ENCODE measurements at regions of chr20 and their contacts with region 1.

Region 1: GRCh38 chr20:44966030-44966961 is at the start of gene STK4:
- DNase-seq: peak; percentile 92
- H3K4me3 ChIP-seq: peak within 1 kb of the TSS; percentile 65 to 82
- H3K27ac ChIP-seq: peak within 1 kb of the TSS; percentile 80 to 84
- H3K4me1 ChIP-seq: peaks cover 6% of the 10 kb centered on the region
- H3K27me3 ChIP-seq: no peaks in the 10 kb centered on the region
- CTCF ChIP-seq: peak; percentile 54 to 82 (median 67)
- POLR2A ChIP-seq: peak; percentile 86
- total RNA-seq, gene STK4: 14.4 to 35.1 TPM

Region 2: GRCh38 chr20:44885392-44886265 is 80.7 kb before region 1 on chr20 and contains the start of gene YWHAB:
- intact Hi-C with region 1: loop called (anchors 5 kb)
- DNase-seq: peak; percentile 97
- H3K4me3 ChIP-seq: peak within 1 kb of the TSS; percentile 81 to 100
- H3K27ac ChIP-seq: peak within 1 kb of the TSS; percentile 87 to 93
- H3K4me1 ChIP-seq: peaks cover 15% of the 10 kb centered on the region
- H3K27me3 ChIP-seq: no peaks in the 10 kb centered on the region
- CTCF ChIP-seq: no peak
- POLR2A ChIP-seq: peak; percentile 78
- total RNA-seq, gene YWHAB: 122 to 131 TPM

Measured in prostate gland (tissue), 2 donors.